ENCODE measurements at regions of chr9 and their contacts with region 1.

Region 1: GRCh38 chr9:135505406-135506187 is 5.1 kb downstream of the MRPS2 start:
- DNase-seq: no peak
- ATAC-seq: no peak
- H3K4me3 ChIP-seq: no peak overlapping the region
- H3K27ac ChIP-seq: no peak overlapping the region
- H3K4me1 ChIP-seq: peaks cover 4% of the 10 kb centered on the region
- H3K27me3 ChIP-seq: no peaks in the 10 kb centered on the region
- CTCF ChIP-seq: no peak

Region 2: DNA sequence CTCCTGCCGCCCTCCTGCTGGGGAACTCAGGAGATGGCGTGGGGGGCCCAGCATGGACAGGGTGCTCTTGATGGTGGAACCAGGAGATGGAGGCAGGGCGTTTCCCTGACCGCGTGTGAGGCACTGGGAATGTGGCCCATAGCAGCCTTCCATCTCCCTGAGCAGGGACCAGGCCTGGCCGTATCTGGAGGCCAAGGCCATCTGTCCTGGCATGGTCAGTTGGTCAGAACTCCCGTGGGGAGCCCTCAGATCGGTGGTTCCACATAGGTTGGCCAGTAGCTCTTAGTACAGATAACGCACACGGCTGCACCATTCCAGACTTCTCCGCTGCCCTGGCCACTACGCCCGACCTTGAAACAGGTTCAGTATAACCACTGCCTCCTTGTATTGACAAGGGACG is 274.0 kb after region 1 on chr9:
- CTCF ChIA-PET with region 1: interaction called, 10 read pairs
- POLR2A ChIA-PET with region 1: no interaction called
- in situ Hi-C with region 1: no loop called
- intact Hi-C with region 1: no loop called
- DNase-seq: no peak
- ATAC-seq: no peak
- H3K4me3 ChIP-seq: no peak overlapping the region
- H3K27ac ChIP-seq: no peak overlapping the region
- H3K4me1 ChIP-seq: no peaks in the 10 kb centered on the region
- H3K27me3 ChIP-seq: no peaks in the 10 kb centered on the region
- CTCF ChIP-seq: no peak

Measured in Panc1 (cell line).